ENCODE measurements at regions of chr6 and their contacts with region 1.

Region 1: GRCh38 chr6:148947621-148948444 is 201.0 kb downstream of the UST start:
- DNase-seq: peak; percentile 86
- H3K4me3 Mint-ChIP-seq: no peak overlapping the region
- H3K27ac Mint-ChIP-seq: no peak overlapping the region
- H3K4me1 Mint-ChIP-seq: peaks cover 17% of the 10 kb centered on the region
- H3K27me3 Mint-ChIP-seq: no peaks in the 10 kb centered on the region

Region 2: GRCh38 chr6:148559848-148560433 is 387.9 kb before region 1 on chr6:
- CTCF ChIA-PET with region 1: interaction called, 13 read pairs
- POLR2A ChIA-PET with region 1: no interaction called
- intact Hi-C with region 1: loop called (anchors 2 kb)
- DNase-seq: peak; percentile 77
- H3K4me3 Mint-ChIP-seq: no peak overlapping the region
- H3K27ac Mint-ChIP-seq: no peak overlapping the region
- H3K4me1 Mint-ChIP-seq: peaks cover 7% of the 10 kb centered on the region
- H3K27me3 Mint-ChIP-seq: peaks cover 15% of the 10 kb centered on the region

Region 3: GRCh38 chr6:148578245-148578732 is 369.5 kb before region 1 on chr6:
- CTCF ChIA-PET with region 1: interaction called, 12 read pairs
- POLR2A ChIA-PET with region 1: no interaction called
- intact Hi-C with region 1: loop called (anchors 1 kb)
- DNase-seq: peak; percentile 73
- H3K4me3 Mint-ChIP-seq: no peak overlapping the region
- H3K27ac Mint-ChIP-seq: no peak overlapping the region
- H3K4me1 Mint-ChIP-seq: peaks cover 6% of the 10 kb centered on the region
- H3K27me3 Mint-ChIP-seq: peaks cover 27% of the 10 kb centered on the region

Region 4: DNA sequence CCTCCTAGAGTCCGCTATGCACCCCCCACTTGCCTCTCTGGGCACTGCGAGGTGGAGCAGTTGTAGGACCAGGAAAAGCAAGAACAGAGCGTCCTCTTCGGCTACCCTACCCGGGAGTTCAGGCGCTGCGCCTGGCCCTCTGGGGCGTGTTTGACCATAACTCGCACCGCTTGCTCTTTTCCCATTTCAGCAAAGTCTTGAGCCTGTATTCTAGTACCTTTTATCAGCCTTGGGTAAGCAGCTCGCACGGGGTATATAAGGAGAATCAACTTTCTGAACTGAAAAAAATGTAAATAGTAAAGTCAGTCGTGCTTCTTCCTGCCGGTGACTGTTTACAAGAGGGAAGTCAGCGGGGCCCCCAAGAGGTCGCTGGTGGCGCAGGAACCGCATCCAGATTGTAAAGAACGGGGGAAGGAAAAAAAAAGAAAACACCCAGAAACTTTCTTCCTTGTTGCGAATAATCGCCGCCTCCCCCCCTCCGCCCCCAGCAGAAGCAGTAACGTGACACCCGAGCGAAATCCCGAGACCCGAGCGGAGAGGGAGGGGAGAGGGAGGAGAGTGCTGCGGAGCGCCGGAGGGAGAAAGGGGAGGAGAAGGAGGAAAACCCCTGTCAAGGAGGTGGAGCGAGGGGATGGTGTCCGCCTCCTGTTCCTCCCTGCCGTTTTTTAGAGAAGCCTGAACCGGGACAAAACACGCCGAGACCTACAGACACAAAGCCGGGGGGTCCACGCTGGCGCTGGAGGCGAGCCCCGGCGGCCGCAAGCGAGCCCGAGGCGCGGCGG is 201.3 kb before region 1 on chr6 and contains the start of gene UST:
- CTCF ChIA-PET with region 1: interaction called, 5 read pairs
- POLR2A ChIA-PET with region 1: no interaction called
- intact Hi-C with region 1: loop called (anchors 1 kb)
- DNase-seq: peak; percentile 79
- H3K4me3 Mint-ChIP-seq: peak within 1 kb of the TSS; percentile 88
- H3K27ac Mint-ChIP-seq: peak within 1 kb of the TSS; percentile 78
- H3K4me1 Mint-ChIP-seq: peaks cover 28% of the 10 kb centered on the region
- H3K27me3 Mint-ChIP-seq: peaks cover 8% of the 10 kb centered on the region
- total RNA-seq, gene UST: 3.7 to 4.9 TPM

Region 5: DNA sequence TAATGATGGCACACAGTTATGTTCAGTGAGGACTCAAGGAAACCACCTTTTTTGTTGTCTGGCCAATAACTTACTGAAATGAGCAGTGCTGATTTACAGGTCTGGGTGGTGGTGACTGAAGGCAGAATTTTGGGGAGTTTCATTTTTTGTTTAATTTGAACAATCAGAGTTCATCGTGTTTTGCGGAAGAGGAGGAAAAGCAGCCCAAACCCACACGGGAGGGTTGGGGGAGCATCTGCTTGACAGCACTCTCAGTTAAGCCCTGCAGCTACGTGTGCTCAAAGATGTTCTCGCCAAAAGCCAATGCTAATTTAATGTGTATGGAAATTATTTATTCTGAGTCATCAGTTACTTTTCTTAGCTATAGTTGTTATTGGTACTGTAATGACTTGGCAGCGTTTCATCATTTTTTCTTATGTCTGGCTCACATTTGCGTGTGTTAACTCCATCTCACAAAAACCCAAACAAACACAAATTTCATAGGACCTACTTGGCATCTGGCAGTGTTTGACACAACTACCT is 111.9 kb before region 1 on chr6:
- CTCF ChIA-PET with region 1: no interaction called
- POLR2A ChIA-PET with region 1: interaction called, 3 read pairs
- intact Hi-C with region 1: loop called (anchors 2 kb)
- DNase-seq: peak; percentile 71
- H3K4me3 Mint-ChIP-seq: peak overlapping the region; percentile 36
- H3K27ac Mint-ChIP-seq: peak overlapping the region; percentile 79
- H3K4me1 Mint-ChIP-seq: peaks cover 49% of the 10 kb centered on the region
- H3K27me3 Mint-ChIP-seq: peaks cover 5% of the 10 kb centered on the region

Region 6: DNA sequence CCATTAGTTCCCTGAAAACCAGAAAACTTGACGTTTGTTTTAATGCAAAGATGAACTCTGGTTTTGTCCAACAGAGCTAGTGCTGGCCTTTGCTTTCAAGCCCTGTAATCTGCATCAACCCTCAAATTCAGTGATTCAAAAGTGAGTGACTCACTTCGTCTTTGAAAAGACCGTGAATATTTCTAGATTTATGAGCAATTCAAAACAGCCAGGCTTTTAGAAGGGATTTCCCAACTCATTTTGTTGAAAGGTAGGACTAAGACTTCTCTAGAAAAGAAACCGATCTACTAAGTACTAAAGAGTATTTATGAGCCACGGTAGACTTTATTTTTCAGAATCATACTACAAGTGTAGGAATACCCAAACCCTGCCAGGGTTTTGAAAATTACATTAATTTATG is 79.5 kb before region 1 on chr6:
- CTCF ChIA-PET with region 1: no interaction called
- POLR2A ChIA-PET with region 1: no interaction called
- intact Hi-C with region 1: loop called (anchors 1 kb)
- DNase-seq: no peak
- H3K4me3 Mint-ChIP-seq: peak overlapping the region; percentile 23
- H3K27ac Mint-ChIP-seq: peak overlapping the region; percentile 88
- H3K4me1 Mint-ChIP-seq: peaks cover 55% of the 10 kb centered on the region
- H3K27me3 Mint-ChIP-seq: no peaks in the 10 kb centered on the region

Region 7: GRCh38 chr6:149024361-149024760 is 76.5 kb after region 1 on chr6:
- CTCF ChIA-PET with region 1: no interaction called
- POLR2A ChIA-PET with region 1: no interaction called
- intact Hi-C with region 1: no loop called
- DNase-seq: no peak
- H3K4me3 Mint-ChIP-seq: no peak overlapping the region
- H3K27ac Mint-ChIP-seq: no peak overlapping the region
- H3K4me1 Mint-ChIP-seq: peaks cover 11% of the 10 kb centered on the region
- H3K27me3 Mint-ChIP-seq: no peaks in the 10 kb centered on the region

Measured in activated CD4-positive, alpha-beta memory T cell treated with anti-CD3 and anti-CD28 coated beads for 36 hours (primary cell).